PC-3 (cell line): ENCODE measurements at regions of chr22 and their contacts with region 1.

Region 1: GRCh38 chr22:36144886-36145541 is 15.5 kb downstream of the APOL3 start:
- DNase-seq: peak; percentile 51
- ATAC-seq: peak; percentile 71
- H3K4me3 ChIP-seq: no peak overlapping the region
- H3K27ac ChIP-seq: no peak overlapping the region
- H3K4me1 ChIP-seq: no peaks in the 10 kb centered on the region
- H3K27me3 ChIP-seq: no peaks in the 10 kb centered on the region
- CTCF ChIP-seq: peak; percentile 74

Region 2: GRCh38 chr22:35766654-35767580 is 378.1 kb before region 1 on chr22:
- CTCF ChIA-PET with region 1: no interaction called
- POLR2A ChIA-PET with region 1: interaction called, 10 read pairs
- intact Hi-C with region 1: no loop called
- DNase-seq: peak; percentile 67
- ATAC-seq: peak; percentile 68
- H3K4me3 ChIP-seq: peak overlapping the region; percentile 22; the same call in 1 of the 2 replicates
- H3K27ac ChIP-seq: peak overlapping the region; percentile 53
- H3K4me1 ChIP-seq: peaks cover 19% of the 10 kb centered on the region
- H3K27me3 ChIP-seq: no peaks in the 10 kb centered on the region
- CTCF ChIP-seq: no peak

Region 3: GRCh38 chr22:36180038-36180880 is 35.2 kb after region 1 on chr22:
- CTCF ChIA-PET with region 1: no interaction called
- POLR2A ChIA-PET with region 1: interaction called, 9 read pairs
- intact Hi-C with region 1: loop called (anchors 1 kb)
- DNase-seq: peak; percentile 55
- ATAC-seq: peak; percentile 80
- H3K4me3 ChIP-seq: no peak overlapping the region
- H3K27ac ChIP-seq: no peak overlapping the region
- H3K4me1 ChIP-seq: no peaks in the 10 kb centered on the region
- H3K27me3 ChIP-seq: no peaks in the 10 kb centered on the region
- CTCF ChIP-seq: peak; percentile 74